ENCODE measurements at regions of chr11 and their contacts with region 1.

Region 1: DNA sequence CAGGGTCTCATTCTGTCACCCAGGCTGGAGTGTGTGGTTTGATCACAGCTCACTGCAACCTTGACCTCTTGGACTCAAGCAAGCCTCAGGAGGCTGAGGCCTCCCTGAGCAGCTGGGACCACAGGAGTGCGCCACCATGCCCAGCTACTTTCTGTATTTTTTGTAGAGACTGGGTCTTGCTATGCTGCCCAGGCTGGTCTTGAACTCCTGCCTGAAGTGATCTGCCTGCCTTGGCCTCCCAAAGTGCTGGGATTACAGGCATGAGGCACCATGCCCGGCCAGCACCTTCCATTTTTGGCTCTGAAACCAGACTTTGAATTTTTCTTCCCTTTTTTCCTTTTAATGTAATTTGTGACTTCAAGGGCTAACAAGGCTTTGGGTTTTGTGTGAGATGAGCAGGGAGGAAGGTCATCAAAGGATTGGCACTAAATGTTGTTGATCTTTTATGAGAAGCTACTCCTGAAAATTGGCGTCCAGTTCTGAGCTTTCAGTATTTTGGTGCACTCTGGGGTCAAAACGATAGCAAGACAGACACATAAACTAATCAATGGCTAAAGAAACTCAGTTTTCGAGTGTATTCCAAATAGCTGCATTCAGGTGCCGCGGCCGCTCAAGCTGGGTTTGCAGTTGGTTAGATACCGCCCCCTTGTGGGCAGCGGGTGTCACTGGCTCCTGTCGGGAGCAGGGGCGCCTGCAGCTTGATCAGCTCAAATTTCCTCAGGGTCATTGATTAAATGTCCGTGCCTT is 51.9 kb upstream of the CLMP start:
- DNase-seq: peak; percentile 89
- H3K4me3 Mint-ChIP-seq: no peak overlapping the region
- H3K27ac Mint-ChIP-seq: no peak overlapping the region
- H3K4me1 Mint-ChIP-seq: peaks cover 9% of the 10 kb centered on the region
- H3K27me3 Mint-ChIP-seq: peaks cover 35% of the 10 kb centered on the region

Region 2: GRCh38 chr11:123103326-123103980 is 143.5 kb before region 1 on chr11:
- CTCF ChIA-PET with region 1: interaction called, 163 read pairs
- DNase-seq: peak; percentile 51
- H3K4me3 Mint-ChIP-seq: no peak overlapping the region
- H3K27ac Mint-ChIP-seq: peak overlapping the region; percentile 4
- H3K4me1 Mint-ChIP-seq: peaks cover 32% of the 10 kb centered on the region
- H3K27me3 Mint-ChIP-seq: peaks cover 7% of the 10 kb centered on the region

Region 3: DNA sequence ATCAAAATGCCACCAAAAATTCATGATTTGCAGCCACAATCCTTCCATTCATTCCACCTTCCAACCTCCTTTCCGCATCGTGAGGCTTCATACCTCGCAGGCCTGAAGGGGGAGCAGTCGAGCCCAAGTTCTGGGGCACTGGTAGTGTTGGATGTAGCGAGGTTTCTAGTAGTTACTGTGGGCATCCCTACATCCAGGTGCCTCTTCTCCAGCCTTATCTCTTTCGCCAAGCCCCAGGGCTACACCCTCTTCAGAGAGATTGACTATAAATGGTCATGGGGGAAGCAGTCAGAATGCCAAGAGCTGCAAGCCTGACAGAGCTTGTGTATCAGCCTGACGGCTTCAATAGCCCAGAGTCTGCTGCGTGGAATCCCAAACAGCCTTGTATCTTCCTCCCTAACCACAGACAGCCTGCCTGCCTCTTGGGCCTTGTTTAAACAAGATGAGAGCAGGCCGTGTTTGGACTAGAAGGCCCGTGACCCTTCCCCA is 80.8 kb before region 1 on chr11:
- CTCF ChIA-PET with region 1: interaction called, 25 read pairs
- DNase-seq: peak; percentile 43
- H3K4me3 Mint-ChIP-seq: no peak overlapping the region
- H3K27ac Mint-ChIP-seq: no peak overlapping the region
- H3K4me1 Mint-ChIP-seq: no peaks in the 10 kb centered on the region
- H3K27me3 Mint-ChIP-seq: peaks cover 35% of the 10 kb centered on the region

Region 4: DNA sequence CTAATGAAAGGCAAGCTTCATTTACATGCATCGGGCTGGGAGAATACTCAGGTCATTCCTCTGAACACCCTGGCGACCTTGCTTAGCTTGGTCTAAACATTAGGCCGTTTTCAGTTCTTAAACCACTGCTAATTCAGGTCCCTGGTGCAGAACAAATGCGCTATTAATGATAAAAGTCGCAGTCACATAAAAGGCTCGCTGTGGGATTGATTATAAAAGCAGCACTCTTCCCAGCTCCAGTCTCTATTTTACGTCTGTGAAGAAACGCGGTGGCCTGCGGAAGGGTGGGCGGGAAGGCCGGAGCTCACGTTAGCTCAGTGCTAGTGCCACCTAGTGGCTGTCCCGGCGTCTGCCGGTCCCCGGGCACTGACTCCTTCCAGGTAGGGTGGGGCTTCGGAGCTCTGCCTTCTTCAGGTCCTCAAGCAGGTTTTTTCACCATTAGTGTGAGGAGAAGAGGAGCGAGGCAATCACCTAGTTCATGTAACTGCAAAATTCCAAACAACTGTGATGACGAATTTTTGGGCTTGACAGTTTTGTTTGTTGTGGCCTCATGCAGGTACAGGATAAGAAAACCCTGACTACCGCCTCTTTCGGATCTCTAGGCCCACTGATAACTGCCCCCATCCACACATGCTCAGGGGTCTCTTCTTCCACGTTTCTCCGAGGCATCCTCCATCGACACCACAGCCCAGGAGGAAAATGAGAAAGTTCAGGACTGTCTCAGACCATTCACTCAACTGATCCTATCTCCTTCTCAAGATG is 14.6 kb after region 1 on chr11:
- CTCF ChIA-PET with region 1: interaction called, 20 read pairs
- DNase-seq: peak; percentile 78
- H3K4me3 Mint-ChIP-seq: no peak overlapping the region
- H3K27ac Mint-ChIP-seq: no peak overlapping the region
- H3K4me1 Mint-ChIP-seq: peaks cover 24% of the 10 kb centered on the region
- H3K27me3 Mint-ChIP-seq: peaks cover 51% of the 10 kb centered on the region

Region 5: DNA sequence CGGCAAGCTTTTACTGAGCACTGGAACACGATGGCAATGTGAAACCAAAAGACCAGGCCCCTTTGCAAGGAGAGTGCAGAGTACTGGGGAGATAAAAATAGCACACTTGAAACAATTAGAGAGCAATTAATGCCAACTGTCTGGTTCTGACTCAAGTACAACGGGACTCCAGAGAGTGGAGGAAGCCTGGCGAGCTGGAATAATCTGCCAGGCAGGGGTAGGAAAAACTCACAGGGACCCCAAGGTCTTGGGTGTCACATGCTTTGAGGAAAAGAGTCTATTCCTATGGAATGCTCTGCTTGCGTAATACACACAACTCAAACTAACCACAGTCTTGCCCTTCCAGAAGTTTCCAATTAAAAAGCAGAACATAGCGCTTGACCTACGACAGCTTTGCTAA is 61.2 kb after region 1 on chr11:
- CTCF ChIA-PET with region 1: no interaction called
- DNase-seq: no peak
- H3K4me3 Mint-ChIP-seq: no peak overlapping the region
- H3K27ac Mint-ChIP-seq: no peak overlapping the region
- H3K4me1 Mint-ChIP-seq: peaks cover 23% of the 10 kb centered on the region
- H3K27me3 Mint-ChIP-seq: peaks cover 2% of the 10 kb centered on the region